AG04449 (cell line): ENCODE measurements at regions of chr5 and their contacts with region 1.

Region 1: GRCh38 chr5:179623003-179623880 is at the start of gene HNRNPH1:
- DNase-seq: peak; percentile 87
- H3K4me3 ChIP-seq: peak within 1 kb of the TSS; percentile 100
- CTCF ChIP-seq: no peak

Region 2: DNA sequence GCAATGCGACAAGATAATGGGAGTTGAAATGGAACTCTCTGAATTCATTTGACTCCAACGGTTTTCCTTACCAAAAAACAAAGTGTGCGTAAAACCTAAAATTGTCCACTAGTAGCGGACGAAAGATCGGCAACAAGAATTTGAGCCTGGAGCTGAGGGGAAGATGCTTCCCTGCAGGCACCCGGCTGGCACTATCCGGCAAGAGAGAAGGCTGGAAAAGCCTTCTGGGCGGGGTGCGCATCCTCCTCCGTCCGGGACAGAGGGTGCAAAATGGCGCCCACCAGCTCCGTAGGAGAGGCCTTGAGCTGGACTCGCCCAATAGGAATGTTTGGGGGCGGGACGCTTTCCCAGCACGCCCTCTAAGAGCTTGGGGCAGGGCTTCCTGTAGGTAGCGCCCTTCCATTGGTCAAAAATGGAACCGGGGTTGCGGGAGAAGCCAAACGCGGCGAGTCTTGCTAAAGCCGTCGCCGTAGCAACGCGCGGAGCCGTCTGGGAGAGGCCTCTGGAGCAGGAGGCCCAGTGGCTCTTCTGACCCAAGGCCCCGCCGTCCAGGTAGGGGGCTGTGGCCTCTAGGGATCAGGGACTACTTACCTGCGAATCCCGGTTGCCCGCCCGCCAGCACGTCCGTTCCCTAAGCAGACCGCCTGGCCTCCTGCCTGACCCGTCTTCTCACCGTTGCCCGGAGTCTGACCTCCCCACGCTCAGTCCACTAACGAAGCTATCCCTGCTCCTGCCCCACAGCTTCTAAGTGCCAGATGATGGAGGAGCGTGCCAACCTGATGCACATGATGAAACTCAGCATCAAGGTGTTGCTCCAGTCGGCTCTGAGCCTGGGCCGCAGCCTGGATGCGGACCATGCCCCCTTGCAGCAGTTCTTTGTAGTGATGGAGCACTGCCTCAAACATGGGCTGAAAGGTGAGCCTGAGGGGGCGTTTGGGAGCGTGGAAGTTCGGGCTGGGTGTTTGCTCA is 63.7 kb before region 1 on chr5:
- CTCF ChIA-PET with region 1: no interaction called
- POLR2A ChIA-PET with region 1: interaction called, 10 read pairs
- DNase-seq: peak; percentile 94
- H3K4me3 ChIP-seq: peak overlapping the region; percentile 76
- CTCF ChIP-seq: no peak

Region 3: DNA sequence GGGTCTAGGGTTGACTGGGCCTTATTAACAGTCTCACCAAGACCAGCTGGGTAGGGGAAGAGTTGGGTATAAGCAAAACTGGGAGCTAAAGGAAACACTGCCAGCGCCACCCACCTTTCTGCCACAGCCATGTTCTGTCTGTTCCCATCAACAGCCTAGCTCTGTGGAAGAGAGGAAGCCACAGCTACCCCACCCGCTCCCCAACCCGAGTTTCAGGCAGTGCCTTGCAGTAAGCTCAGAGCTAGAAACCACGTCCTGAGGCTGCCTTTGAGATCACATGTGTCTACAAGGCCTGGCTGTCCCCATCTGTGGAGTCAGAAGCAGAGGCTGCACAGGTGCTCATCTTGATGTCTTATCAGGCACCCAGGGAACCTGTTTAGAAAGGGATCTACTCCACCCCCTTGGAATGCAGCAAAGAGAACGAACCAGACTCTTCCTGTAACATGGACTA is 15.1 kb before region 1 on chr5:
- CTCF ChIA-PET with region 1: interaction called, 54 read pairs
- POLR2A ChIA-PET with region 1: interaction called, 37 read pairs
- DNase-seq: no peak
- H3K4me3 ChIP-seq: no peak overlapping the region
- CTCF ChIP-seq: no peak